HCT116 (cell line): ENCODE measurements at regions of chr2 and their contacts with region 1.

Region 1: DNA sequence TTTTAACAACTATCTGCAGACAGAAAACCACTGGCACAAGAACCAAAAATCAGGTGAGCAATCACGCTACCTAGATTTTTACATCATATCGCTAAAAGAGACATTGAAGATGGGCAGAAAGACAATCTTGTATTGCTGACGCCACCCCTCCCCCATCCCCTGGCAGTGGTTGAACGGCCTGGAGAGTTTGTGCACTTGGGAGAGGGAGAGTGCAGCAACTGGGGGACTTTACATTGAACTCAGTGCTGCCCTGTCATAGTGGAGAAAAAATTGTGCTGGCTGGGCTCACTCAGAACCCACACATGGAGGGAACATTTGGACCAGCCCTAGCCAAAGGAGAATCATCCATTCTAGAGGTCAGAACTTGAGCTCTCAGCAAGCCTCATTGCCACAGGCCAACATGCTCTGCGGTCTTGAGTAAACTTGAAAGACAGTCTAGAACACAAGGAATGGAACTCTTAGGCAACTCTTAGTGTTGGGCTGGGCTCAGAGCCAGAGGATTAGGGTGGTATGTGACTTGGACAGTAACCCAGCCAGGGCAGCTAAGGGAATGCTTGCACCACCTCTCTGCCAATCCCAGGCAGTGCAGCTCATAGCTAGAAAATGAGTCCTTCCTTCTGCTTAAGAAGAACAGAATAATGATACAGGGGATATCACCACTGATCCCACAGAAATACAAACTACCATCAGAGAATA is 220.0 kb upstream of the CYP26B1 start:
- DNase-seq: peak; percentile 82
- ATAC-seq: peak; percentile 100
- H3K4me3 ChIP-seq: 0 out of 4 replicates have a peak overlapping the region, but pooled peaks of 1 of the 2 experiments have one; percentile 0
- H3K27ac ChIP-seq: 0 out of 2 replicates have a peak overlapping the region, but pooled peaks have one; percentile 34
- H3K4me1 ChIP-seq: peaks cover 6 to 10% of the 10 kb centered on the region in 2 experiments; a peak in 3 of 4 replicates
- H3K27me3 ChIP-seq: no peaks in the 10 kb centered on the region
- CTCF ChIP-seq: peak; percentile 34 to 69 (median 46); a peak in 5 of 6 replicates
- POLR2A ChIP-seq: no peak
- RAD21 ChIP-seq: peak; percentile 58

Region 2: DNA sequence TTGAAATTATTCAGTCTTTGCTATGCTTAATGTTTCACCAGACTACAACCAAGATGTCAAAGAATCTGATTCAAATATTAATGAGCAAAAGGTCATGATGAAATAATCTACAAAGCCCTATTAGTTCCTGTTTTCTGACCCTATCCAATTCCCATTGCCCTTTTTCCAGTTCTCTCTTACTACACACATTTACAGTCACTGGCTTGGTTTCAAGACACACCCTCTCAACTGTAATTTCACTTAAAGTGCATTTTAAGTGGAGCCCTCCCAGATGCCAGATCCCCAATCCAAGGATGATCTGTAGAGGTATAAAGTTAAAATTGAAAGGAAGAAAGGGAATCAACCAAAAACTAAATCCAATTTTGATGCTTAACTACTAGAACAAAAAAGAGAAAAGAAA is 27.0 kb after region 1 on chr2:
- CTCF ChIA-PET with region 1: no interaction called
- POLR2A ChIA-PET with region 1: no interaction called
- RAD21 ChIA-PET with region 1: no interaction called
- intact Hi-C with region 1: loop called (anchors 2 kb)
- DNase-seq: no peak
- ATAC-seq: no peak
- H3K4me3 ChIP-seq: no peak overlapping the region
- H3K27ac ChIP-seq: no peak overlapping the region
- H3K4me1 ChIP-seq: no peaks in the 10 kb centered on the region
- H3K27me3 ChIP-seq: no peaks in the 10 kb centered on the region
- CTCF ChIP-seq: no peak
- POLR2A ChIP-seq: no peak
- RAD21 ChIP-seq: no peak

Region 3: DNA sequence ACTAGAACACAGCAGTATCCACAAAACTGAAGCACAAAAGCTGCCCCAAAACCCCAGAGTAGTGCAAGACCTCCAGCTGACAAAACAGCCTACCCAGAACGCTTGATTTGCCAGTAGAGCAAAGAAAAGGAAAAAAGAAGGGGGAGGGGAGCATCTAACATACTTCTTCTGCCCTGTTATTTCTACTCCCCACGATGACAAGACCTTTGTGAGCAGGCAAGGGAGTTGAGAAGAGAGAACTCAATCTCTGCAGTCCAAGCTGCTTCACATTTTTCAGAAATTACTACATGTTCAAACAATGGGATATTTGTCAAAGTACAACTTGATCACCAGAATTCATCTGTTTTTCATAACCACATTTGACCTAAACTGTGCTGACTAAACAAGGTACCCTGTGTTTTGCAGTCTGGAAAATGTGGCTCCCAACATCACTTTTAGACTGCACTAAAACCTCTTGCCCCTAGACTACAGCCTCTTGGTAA is 171.4 kb after region 1 on chr2:
- CTCF ChIA-PET with region 1: no interaction called
- POLR2A ChIA-PET with region 1: no interaction called
- RAD21 ChIA-PET with region 1: no interaction called
- intact Hi-C with region 1: no loop called
- DNase-seq: no peak
- ATAC-seq: peak; percentile 61; the same call in 1 of the 2 replicates
- H3K4me3 ChIP-seq: no peak overlapping the region
- H3K27ac ChIP-seq: no peak overlapping the region
- H3K4me1 ChIP-seq: peaks cover 7 to 14% of the 10 kb centered on the region in 2 experiments
- H3K27me3 ChIP-seq: no peaks in the 10 kb centered on the region
- CTCF ChIP-seq: no peak
- POLR2A ChIP-seq: no peak
- RAD21 ChIP-seq: no peak

Region 4: DNA sequence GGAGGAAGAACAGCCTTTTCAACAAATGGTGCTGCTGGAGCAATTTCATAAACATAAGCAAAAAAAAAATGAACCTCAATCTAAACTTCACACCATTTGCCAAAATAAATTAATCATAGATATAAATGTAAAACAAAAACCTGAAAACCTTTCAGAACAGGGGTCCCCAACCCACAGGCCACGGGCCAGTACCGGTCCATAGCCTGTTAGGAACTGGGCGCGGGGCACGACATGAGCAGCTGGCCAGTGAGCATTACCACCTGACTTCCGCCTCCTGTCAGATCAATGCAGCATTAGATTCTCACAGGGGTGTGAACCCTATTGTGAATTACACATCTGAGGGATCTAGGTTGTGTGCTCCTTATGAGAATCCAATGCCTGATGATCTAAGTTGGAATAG is 282.1 kb after region 1 on chr2:
- CTCF ChIA-PET with region 1: no interaction called
- POLR2A ChIA-PET with region 1: no interaction called
- RAD21 ChIA-PET with region 1: no interaction called
- intact Hi-C with region 1: no loop called
- DNase-seq: no peak
- ATAC-seq: no peak
- H3K4me3 ChIP-seq: no peak overlapping the region
- H3K27ac ChIP-seq: no peak overlapping the region
- H3K4me1 ChIP-seq: no peaks in the 10 kb centered on the region
- H3K27me3 ChIP-seq: no peaks in the 10 kb centered on the region
- CTCF ChIP-seq: no peak
- POLR2A ChIP-seq: no peak
- RAD21 ChIP-seq: no peak